ENCODE measurements at regions of chr4 and their contacts with region 1.

Region 1: DNA sequence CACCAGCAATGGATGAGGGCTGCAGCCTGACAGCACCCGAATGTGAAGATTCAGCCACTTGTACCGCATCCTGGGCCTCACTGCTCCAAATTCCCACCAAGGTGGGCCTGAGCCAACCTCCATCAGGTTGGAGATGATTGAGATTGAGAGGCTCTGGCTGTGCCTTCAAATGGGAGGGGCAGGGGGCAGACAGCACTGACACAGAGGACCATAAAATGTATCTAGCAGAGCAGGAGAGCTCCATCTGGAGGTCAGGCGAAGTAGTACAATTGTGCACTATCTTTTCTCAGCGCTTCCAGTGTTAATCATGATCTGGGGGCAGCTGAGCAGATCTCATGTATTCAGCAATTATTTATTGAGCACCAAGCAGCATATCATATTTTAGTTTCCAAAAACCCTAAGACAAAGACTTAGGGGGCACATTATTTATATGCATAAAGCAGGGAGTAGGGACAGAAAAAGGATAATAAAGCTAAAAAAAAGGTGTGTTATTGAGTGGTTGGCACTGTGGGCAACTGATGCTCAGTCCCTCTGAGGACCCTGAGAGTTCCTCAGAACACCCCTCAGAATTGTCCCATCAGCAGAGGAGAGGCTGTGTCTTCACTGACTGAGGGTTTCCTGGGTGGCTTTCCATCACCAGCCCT is 31.6 kb upstream of the C1QTNF7 start:
- DNase-seq: peak; percentile 62 to 65 (median 64)
- ATAC-seq: peak; percentile 94
- H3K4me3 ChIP-seq: no peak overlapping the region
- H3K27ac ChIP-seq: no peak overlapping the region
- H3K4me1 ChIP-seq: no peaks in the 10 kb centered on the region
- H3K27me3 ChIP-seq: no peaks in the 10 kb centered on the region
- CTCF ChIP-seq: peak; percentile 74 to 76 (median 75)
- EP300 ChIP-seq: no peak
- POLR2A ChIP-seq: no peak
- RAD21 ChIP-seq: peak; percentile 41 to 70; a peak in 3 of 4 replicates

Region 2: DNA sequence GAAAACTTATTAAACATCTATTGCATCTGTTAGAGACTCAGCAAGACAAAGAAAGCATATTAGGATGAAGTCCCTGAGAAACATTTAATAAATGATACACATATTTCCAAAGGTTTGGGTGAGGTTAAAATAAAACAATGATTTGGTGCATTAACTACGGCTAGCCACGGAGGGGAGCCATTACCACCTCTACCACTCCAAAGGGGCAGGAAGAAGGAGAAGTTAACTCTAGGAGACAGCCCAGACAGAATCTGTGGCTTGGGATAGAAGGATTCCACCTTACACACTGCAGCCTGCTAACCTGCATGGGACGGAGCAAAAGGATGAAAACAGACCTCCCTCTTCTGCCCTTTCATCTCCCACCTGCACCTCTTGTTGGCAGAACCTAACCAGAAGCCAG is 157.6 kb before region 1 on chr4:
- CTCF ChIA-PET with region 1: interaction called, 5 read pairs
- POLR2A ChIA-PET with region 1: no interaction called
- in situ Hi-C with region 1: loop called (anchors 10 kb)
- intact Hi-C with region 1: loop called (anchors 2 kb)
- DNase-seq: peak; percentile 19 to 41 (median 22)
- ATAC-seq: peak; percentile 78
- H3K4me3 ChIP-seq: no peak overlapping the region
- H3K27ac ChIP-seq: no peak overlapping the region
- H3K4me1 ChIP-seq: no peaks in the 10 kb centered on the region
- H3K27me3 ChIP-seq: peaks cover 0 to 7% of the 10 kb centered on the region in 2 experiments; a peak in 1 of 5 replicates
- CTCF ChIP-seq: peak; percentile 51 to 70 (median 60)
- EP300 ChIP-seq: no peak
- POLR2A ChIP-seq: no peak
- RAD21 ChIP-seq: peak; percentile 68 to 74

Region 3: GRCh38 chr4:15457406-15458201 is 61.3 kb after region 1 on chr4:
- CTCF ChIA-PET with region 1: no interaction called
- POLR2A ChIA-PET with region 1: no interaction called
- in situ Hi-C with region 1: no loop called
- intact Hi-C with region 1: loop called (anchors 2 kb)
- DNase-seq: peak; percentile 27 to 37 (median 30)
- ATAC-seq: peak; percentile 86
- H3K4me3 ChIP-seq: no peak overlapping the region
- H3K27ac ChIP-seq: no peak overlapping the region
- H3K4me1 ChIP-seq: no peaks in the 10 kb centered on the region
- H3K27me3 ChIP-seq: no peaks in the 10 kb centered on the region
- CTCF ChIP-seq: peak; percentile 42 to 79 (median 66); a peak in 5 of 6 replicates
- EP300 ChIP-seq: no peak
- POLR2A ChIP-seq: no peak
- RAD21 ChIP-seq: peak; percentile 64 to 77

Measured in K562 (cell line).